Activated CD4-positive, alpha-beta T cell treated with anti-CD3 and anti-CD28 coated beads, Interleukin-2, amount 10 ng/mL, durations not matched to agents 24 days and 14 days (primary cell): ENCODE measurements at regions of chr4 and their contacts with region 1.

Region 1: GRCh38 chr4:139301113-139301820 is at the start of gene NAA15:
- DNase-seq: peak; percentile 99
- H3K4me3 Mint-ChIP-seq: peak within 1 kb of the TSS; percentile 99
- H3K27ac Mint-ChIP-seq: peak within 1 kb of the TSS; percentile 100
- H3K4me1 Mint-ChIP-seq: peaks cover 52% of the 10 kb centered on the region
- H3K27me3 Mint-ChIP-seq: no peaks in the 10 kb centered on the region
- total RNA-seq, gene NAA15: 114 and 115 TPM in 2 replicates

Region 2: GRCh38 chr4:138892483-138893407 is 408.5 kb before region 1 on chr4:
- intact Hi-C with region 1: no loop called
- DNase-seq: no peak
- H3K4me3 Mint-ChIP-seq: no peak overlapping the region
- H3K27ac Mint-ChIP-seq: no peak overlapping the region
- H3K4me1 Mint-ChIP-seq: peaks cover 8% of the 10 kb centered on the region
- H3K27me3 Mint-ChIP-seq: peaks cover 15% of the 10 kb centered on the region

Region 3: DNA sequence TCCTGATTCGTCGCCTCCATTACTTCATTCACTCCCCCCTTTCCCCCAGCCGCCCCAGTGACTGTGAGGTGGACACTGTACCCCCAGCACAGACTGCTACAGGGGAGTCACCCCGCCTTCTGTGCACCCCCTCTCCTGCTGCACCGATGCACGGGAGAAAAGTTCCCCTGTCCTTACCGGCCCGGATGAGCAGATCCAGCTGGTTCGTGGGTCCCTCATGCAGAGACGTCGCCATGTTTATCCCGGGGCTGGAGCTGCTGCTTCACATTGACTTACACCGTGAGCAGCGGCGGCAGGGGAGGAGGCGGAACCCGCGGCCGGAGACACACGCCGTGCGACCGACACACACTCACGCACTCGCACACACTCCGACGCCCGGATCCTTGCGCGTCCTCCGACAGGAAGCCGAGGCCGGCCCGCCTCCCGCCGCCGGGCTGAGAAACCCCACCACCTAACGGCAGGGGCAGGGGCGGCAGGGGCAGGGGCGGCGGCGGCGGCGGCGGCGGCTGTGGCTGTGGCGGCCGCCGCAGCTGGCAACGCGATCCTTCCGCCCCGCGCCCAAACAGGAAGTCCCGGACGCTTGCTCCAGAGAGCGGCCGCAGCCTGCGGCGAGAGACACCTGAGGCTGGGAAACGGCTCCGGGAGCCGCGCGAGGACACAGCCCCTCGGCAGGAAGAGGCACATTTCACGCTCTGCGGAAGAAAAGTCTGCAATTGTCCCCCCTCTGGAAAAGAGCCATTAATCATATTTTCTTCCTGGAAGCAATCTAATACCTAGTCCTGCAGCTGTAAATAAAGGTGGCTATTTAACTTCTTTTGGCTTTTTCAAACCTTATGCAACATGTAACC is 217.1 kb before region 1 on chr4:
- intact Hi-C with region 1: loop called (anchors 1 kb)
- DNase-seq: peak; percentile 95
- H3K4me3 Mint-ChIP-seq: peak overlapping the region; percentile 100
- H3K27ac Mint-ChIP-seq: peak overlapping the region; percentile 100
- H3K4me1 Mint-ChIP-seq: peaks cover 30% of the 10 kb centered on the region
- H3K27me3 Mint-ChIP-seq: peaks cover 2% of the 10 kb centered on the region

Region 4: GRCh38 chr4:139333046-139333445 is 31.8 kb after region 1 on chr4:
- intact Hi-C with region 1: loop called (anchors 2 kb)
- DNase-seq: no peak
- H3K4me3 Mint-ChIP-seq: no peak overlapping the region
- H3K27ac Mint-ChIP-seq: peak overlapping the region; percentile 66
- H3K4me1 Mint-ChIP-seq: peaks cover 24% of the 10 kb centered on the region
- H3K27me3 Mint-ChIP-seq: no peaks in the 10 kb centered on the region